Gastrocnemius medialis (tissue), 4 donors: ENCODE measurements at regions of chr1 and their contacts with region 1.

Region 1: GRCh38 chr1:2642560-2643413 is 10.0 kb upstream of the MMEL1 start:
- DNase-seq: peak; percentile 67 to 68
- ATAC-seq: peak; percentile 60 to 71
- H3K4me3 ChIP-seq: peak overlapping the region; percentile 66 to 76 (median 69)
- H3K27ac ChIP-seq: peak overlapping the region; percentile 55 to 81 (median 76)
- H3K4me1 ChIP-seq: peaks cover 0 to 10% of the 10 kb centered on the region in 2 donors
- H3K27me3 ChIP-seq: peaks cover 6 to 18% (median 7%) of the 10 kb centered on the region in 3 donors
- CTCF ChIP-seq: no peak
- POLR2A ChIP-seq: peak; percentile 44 to 45

Region 2: GRCh38 chr1:2556277-2556677 is 86.5 kb before region 1 on chr1 and contains the start of gene TNFRSF14:
- in situ Hi-C with region 1: no loop called
- intact Hi-C with region 1: loop called (anchors 10 kb)
- DNase-seq: peak in 1 of 2 donors; percentile 35
- ATAC-seq: peak; percentile 51 to 77
- H3K4me3 ChIP-seq: peak within 1 kb of the TSS; percentile 68 to 96 (median 72)
- H3K27ac ChIP-seq: peak within 1 kb of the TSS; percentile 71 to 87 (median 85)
- H3K4me1 ChIP-seq: peaks cover 7 to 21% of the 10 kb centered on the region in 2 donors
- H3K27me3 ChIP-seq: peaks cover 0 to 4% (median 0%) of the 10 kb centered on the region in 3 donors
- CTCF ChIP-seq: no peak
- POLR2A ChIP-seq: no peak
- total RNA-seq, gene TNFRSF14: 3.4 to 11.5 (median 5.0) TPM